ENCODE measurements at regions of chr11 and their contacts with region 1.

Region 1: GRCh38 chr11:108008656-108009496 is at the start of gene CUL5:
- DNase-seq: peak; percentile 89
- H3K4me3 Mint-ChIP-seq: peak within 1 kb of the TSS; percentile 97
- H3K27ac Mint-ChIP-seq: peak within 1 kb of the TSS; percentile 98
- H3K4me1 Mint-ChIP-seq: peaks cover 15% of the 10 kb centered on the region
- H3K27me3 Mint-ChIP-seq: no peaks in the 10 kb centered on the region
- total RNA-seq, gene CUL5: 23.2 to 29.3 TPM

Region 2: DNA sequence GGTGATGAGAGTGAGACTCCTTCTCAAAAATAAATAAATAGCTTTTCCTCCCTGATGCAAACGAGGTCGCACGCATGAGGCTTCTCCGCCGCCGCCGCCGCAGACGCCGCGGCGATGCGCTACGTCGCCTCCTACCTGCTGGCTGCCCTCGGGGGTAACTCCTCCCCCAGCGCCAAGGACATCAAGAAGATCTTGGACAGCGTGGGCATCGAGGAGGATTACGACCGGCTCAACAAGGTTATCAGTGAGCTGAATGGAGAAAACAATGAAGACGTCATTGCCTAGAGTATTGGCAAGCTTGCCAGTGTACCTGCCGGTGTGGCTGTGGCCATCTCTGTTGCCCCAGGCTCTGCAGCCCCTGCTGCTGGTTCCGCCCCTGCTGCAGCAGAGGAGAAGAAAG is 100.6 kb before region 1 on chr11:
- CTCF ChIA-PET with region 1: no interaction called
- POLR2A ChIA-PET with region 1: no interaction called
- DNase-seq: no peak
- H3K4me3 Mint-ChIP-seq: no peak overlapping the region
- H3K27ac Mint-ChIP-seq: no peak overlapping the region
- H3K4me1 Mint-ChIP-seq: no peaks in the 10 kb centered on the region
- H3K27me3 Mint-ChIP-seq: peaks cover 17% of the 10 kb centered on the region

Region 3: GRCh38 chr11:108037636-108038035 is 28.8 kb after region 1 on chr11:
- CTCF ChIA-PET with region 1: interaction called, 11 read pairs
- POLR2A ChIA-PET with region 1: no interaction called
- DNase-seq: no peak
- H3K4me3 Mint-ChIP-seq: no peak overlapping the region
- H3K27ac Mint-ChIP-seq: no peak overlapping the region
- H3K4me1 Mint-ChIP-seq: no peaks in the 10 kb centered on the region
- H3K27me3 Mint-ChIP-seq: no peaks in the 10 kb centered on the region